ENCODE measurements at regions of chr2 and their contacts with region 1.

Region 1: GRCh38 chr2:223674998-223675609 is 72.9 kb upstream of the SCG2 start:
- DNase-seq: peak; percentile 71
- H3K4me3 Mint-ChIP-seq: no peak overlapping the region
- H3K27ac Mint-ChIP-seq: peak overlapping the region; percentile 42
- H3K4me1 Mint-ChIP-seq: peaks cover 9% of the 10 kb centered on the region
- H3K27me3 Mint-ChIP-seq: no peaks in the 10 kb centered on the region
- CTCF ChIP-seq: peak; percentile 77

Region 2: DNA sequence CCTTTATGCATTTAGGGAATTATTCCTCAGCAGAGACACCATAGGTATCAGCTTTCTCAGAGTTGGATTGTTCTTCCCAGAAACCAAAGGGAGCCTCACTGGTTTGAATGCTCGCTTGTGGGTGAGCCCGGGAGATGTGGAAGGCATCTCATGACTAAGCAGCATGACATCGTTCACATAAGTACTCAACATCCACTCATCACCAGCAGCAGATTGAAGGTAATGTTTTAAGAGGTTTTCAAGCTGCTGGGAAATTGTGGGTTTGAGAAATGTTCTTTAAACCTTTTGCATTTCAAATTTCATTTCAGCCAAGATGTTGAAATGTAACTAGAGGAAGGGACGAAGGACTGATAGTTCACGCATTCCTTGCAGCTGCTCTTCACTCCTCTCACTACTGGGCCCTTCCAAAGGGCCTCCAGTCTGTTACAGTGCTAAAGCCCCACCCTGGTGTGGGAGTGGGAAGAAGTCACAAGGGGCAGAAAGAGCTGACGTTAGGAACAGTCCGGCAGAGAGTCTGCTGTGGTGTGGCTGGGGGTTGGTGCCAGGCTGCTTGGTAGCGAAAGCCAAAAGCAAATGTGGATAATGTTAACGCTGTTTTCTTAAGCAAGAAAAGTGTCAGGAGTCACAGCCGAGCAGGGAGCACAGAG is 1778.5 kb before region 1 on chr2:
- CTCF ChIA-PET with region 1: no interaction called
- POLR2A ChIA-PET with region 1: no interaction called
- intact Hi-C with region 1: no loop called
- DNase-seq: no peak
- H3K4me3 Mint-ChIP-seq: no peak overlapping the region
- H3K27ac Mint-ChIP-seq: no peak overlapping the region
- H3K4me1 Mint-ChIP-seq: no peaks in the 10 kb centered on the region
- H3K27me3 Mint-ChIP-seq: no peaks in the 10 kb centered on the region
- CTCF ChIP-seq: no peak

Region 3: DNA sequence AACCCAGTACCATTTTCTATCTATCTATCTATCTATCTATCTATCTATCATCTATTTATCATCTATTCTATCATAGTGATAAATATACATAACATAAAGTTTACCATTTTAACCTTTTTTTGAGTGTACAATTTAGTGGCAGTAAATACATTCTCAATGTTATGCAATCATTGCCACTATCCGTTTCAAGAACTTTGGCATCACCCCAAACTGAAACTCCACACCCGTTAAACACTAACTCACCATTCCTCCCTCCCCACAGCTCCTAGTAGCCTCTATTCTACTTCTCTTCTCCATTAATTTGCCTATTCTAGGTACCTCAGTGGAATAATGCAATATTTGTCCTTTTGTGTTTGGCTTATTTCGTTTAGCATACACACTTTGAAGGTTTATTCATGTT is 705.6 kb before region 1 on chr2:
- CTCF ChIA-PET with region 1: interaction called, 10 read pairs
- POLR2A ChIA-PET with region 1: no interaction called
- intact Hi-C with region 1: loop called (anchors 1 kb)
- DNase-seq: peak; percentile 80
- H3K4me3 Mint-ChIP-seq: no peak overlapping the region
- H3K27ac Mint-ChIP-seq: no peak overlapping the region
- H3K4me1 Mint-ChIP-seq: peaks cover 6% of the 10 kb centered on the region
- H3K27me3 Mint-ChIP-seq: no peaks in the 10 kb centered on the region
- CTCF ChIP-seq: no peak

Region 4: DNA sequence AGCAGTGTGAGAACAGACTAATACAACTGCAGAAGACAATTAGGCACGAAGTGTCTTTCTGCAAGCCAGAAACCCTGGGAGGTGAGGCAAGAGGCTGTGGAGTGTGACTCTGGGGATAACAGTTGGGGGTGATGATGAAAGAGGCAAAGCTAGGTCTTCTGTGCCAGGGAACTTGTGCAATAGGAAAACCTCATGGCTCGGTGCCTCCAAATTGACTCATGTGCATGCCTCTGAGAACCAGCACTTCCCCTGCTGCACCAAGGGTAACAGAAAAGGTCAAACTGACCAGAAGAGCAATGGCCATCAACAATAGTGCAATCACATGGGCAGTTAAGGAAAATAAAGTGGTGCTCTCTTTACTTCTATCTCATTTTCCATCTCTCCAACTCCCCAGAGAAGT is 209.3 kb before region 1 on chr2:
- CTCF ChIA-PET with region 1: interaction called, 5 read pairs
- POLR2A ChIA-PET with region 1: no interaction called
- intact Hi-C with region 1: loop called (anchors 10 kb)
- DNase-seq: peak; percentile 99
- H3K4me3 Mint-ChIP-seq: no peak overlapping the region
- H3K27ac Mint-ChIP-seq: peak overlapping the region; percentile 50
- H3K4me1 Mint-ChIP-seq: peaks cover 36% of the 10 kb centered on the region
- H3K27me3 Mint-ChIP-seq: no peaks in the 10 kb centered on the region
- CTCF ChIP-seq: no peak

Region 5: GRCh38 chr2:223860809-223861738 is 186.0 kb after region 1 on chr2:
- CTCF ChIA-PET with region 1: no interaction called
- POLR2A ChIA-PET with region 1: no interaction called
- intact Hi-C with region 1: loop called (anchors 2 kb)
- DNase-seq: peak; percentile 94
- H3K4me3 Mint-ChIP-seq: peak overlapping the region; percentile 66
- H3K27ac Mint-ChIP-seq: peak overlapping the region; percentile 96
- H3K4me1 Mint-ChIP-seq: peaks cover 15% of the 10 kb centered on the region
- H3K27me3 Mint-ChIP-seq: no peaks in the 10 kb centered on the region
- CTCF ChIP-seq: no peak

Region 6: GRCh38 chr2:224284134-224284946 is 609.2 kb after region 1 on chr2:
- CTCF ChIA-PET with region 1: no interaction called
- POLR2A ChIA-PET with region 1: no interaction called
- intact Hi-C with region 1: loop called (anchors 1 kb)
- DNase-seq: peak; percentile 65
- H3K4me3 Mint-ChIP-seq: no peak overlapping the region
- H3K27ac Mint-ChIP-seq: no peak overlapping the region
- H3K4me1 Mint-ChIP-seq: no peaks in the 10 kb centered on the region
- H3K27me3 Mint-ChIP-seq: peaks cover 25% of the 10 kb centered on the region
- CTCF ChIP-seq: peak; percentile 85

Measured in MCF 10A (cell line).